Right ventricle myocardium inferior (tissue), 1 donor: ENCODE measurements at regions of chr2 and their contacts with region 1.

Region 1: GRCh38 chr2:224650815-224651439 is 65.2 kb downstream of the CCDC195 start:
- DNase-seq: no peak
- ATAC-seq: peak; percentile 46

Region 2: GRCh38 chr2:223970343-223971128 is 680.4 kb before region 1 on chr2:
- intact Hi-C with region 1: loop called (anchors 5 kb)
- DNase-seq: no peak
- ATAC-seq: no peak

Region 3: DNA sequence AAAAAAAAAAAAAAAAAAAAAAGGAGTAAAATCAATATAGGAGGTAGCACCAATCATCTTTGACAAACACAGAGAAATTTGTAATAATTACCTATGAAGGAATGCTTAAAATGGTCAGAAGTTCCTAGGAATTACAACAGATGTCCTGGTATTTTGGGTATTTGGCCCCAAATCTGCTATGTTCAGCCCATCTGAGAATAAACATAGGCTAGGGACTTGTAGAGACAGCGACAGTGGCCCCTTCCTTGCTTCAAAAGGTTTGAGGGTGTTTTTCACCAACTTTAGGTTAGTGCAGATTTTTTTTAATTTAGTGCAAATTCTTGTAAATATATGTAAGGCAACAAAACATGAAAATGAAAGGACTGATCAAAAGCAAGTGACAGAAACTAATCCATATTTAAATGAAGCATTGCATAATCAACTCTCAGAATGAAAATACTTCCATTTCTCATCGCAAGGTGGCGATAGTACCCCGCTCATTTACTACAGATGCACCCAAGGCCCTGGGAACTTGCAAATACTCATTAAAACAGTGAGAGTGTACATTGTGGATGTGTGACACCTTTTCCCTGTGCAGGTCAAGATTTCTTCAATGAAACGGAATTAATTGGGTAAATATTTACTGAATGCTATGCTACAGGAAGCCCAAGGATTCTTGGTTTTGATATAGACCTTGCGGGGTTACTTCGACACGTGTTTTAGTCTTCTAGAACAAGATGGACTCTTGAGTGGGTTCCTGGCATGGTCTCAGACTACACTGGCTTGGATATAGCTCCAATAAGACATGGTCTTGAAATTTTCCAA is 293.6 kb before region 1 on chr2:
- intact Hi-C with region 1: loop called (anchors 1 kb)
- DNase-seq: no peak
- ATAC-seq: no peak

Region 4: DNA sequence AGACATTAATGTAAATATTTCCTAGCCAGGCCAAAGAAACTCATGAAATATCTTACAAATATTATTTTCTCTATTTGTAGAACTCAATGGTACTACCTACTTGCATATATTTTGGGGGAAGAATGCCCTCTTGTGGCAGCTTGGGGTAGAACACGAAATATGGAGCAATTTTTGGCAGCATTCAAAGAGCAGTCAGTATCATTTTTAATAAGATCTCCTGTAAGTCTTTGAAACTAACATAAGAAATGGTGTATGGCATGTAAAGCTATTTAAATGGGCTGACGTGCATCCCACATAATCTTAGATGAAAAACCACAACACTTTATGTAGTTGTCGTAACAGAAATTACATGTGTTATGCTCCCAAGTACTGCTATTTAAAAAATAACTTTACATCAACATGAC is 127.5 kb after region 1 on chr2:
- intact Hi-C with region 1: loop called (anchors 10 kb)
- DNase-seq: no peak
- ATAC-seq: no peak